IMR-90 (cell line): ENCODE measurements at regions of chr12 and their contacts with region 1.

Region 1: DNA sequence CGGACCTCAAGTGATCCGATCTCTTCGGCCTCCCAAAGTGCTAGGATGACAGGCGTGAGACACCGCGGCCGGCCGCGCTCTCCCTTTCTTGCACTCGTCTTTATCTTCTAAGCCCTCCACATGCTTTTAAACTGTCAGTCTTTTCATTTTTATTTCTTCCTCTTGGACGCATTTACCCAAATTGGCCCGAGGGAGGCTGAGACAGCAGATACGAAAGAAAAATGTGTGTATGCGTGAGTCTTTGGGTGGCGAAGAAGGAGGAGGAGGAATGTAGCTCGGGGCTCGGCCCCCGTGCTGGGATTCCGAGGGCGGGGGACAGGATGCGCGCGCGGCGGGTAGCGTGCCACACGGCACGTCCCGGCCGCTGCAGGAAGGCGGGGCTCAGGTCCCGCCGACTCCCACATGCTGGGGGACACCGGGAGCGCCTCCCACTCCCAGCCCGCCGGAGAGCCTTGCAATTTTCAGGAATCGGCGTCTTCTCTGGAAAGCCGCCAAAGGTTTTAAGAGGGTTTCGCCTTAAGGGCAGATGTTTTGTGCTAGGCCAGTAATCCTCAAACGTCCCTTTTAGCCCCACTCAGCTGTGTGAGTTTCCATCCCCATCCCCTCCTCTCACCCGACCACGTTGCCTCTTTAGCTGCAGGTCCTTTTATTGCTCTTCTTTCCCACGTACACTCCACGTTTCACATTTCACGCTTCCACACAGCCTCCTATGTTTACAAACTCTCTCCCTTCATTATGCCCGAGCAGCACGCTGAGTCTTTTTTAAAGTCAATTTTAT is 34.7 kb upstream of the SLC2A3 start:
- DNase-seq: peak; percentile 94
- ATAC-seq: peak; percentile 97
- H3K4me3 ChIP-seq: peak overlapping the region; percentile 42
- H3K27ac ChIP-seq: peak overlapping the region; percentile 96
- H3K4me1 ChIP-seq: peaks cover 6% of the 10 kb centered on the region
- H3K27me3 ChIP-seq: no peaks in the 10 kb centered on the region
- CTCF ChIP-seq: no peak
- POLR2A ChIP-seq: peak; percentile 72
- RAD21 ChIP-seq: peak; percentile 22

Region 2: GRCh38 chr12:7859552-7859951 is 111.1 kb before region 1 on chr12:
- CTCF ChIA-PET with region 1: no interaction called
- POLR2A ChIA-PET with region 1: no interaction called
- dilution Hi-C with region 1: no loop called
- in situ Hi-C with region 1: no loop called
- intact Hi-C with region 1: loop called (anchors 1 kb)
- DNase-seq: peak; percentile 81
- ATAC-seq: peak; percentile 58
- H3K4me3 ChIP-seq: no peak overlapping the region
- H3K27ac ChIP-seq: peak overlapping the region; percentile 43
- H3K4me1 ChIP-seq: peaks cover 3% of the 10 kb centered on the region
- H3K27me3 ChIP-seq: no peaks in the 10 kb centered on the region
- CTCF ChIP-seq: no peak
- POLR2A ChIP-seq: no peak
- RAD21 ChIP-seq: no peak

Region 3: DNA sequence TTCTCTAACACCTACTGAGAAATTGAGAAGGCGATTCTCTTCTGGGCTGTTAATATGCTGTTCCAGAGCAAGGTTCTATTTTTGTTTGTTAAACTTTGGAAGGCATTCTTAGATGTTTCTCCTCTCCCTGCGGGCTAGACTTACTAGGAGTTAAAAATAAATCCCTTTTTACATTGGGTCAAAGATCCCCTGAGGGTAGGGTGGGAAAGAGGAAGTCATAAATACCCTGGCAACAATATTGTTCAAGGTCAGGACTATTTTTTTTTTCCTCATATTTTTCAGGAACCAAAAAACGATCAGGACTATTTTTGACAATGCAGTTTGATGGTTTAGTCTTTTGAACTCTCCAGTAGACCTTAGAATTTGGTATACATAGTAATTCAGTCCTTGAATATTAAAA is 86.0 kb before region 1 on chr12:
- CTCF ChIA-PET with region 1: no interaction called
- POLR2A ChIA-PET with region 1: no interaction called
- dilution Hi-C with region 1: no loop called
- in situ Hi-C with region 1: no loop called
- intact Hi-C with region 1: no loop called
- DNase-seq: no peak
- ATAC-seq: no peak
- H3K4me3 ChIP-seq: no peak overlapping the region
- H3K27ac ChIP-seq: no peak overlapping the region
- H3K4me1 ChIP-seq: no peaks in the 10 kb centered on the region
- H3K27me3 ChIP-seq: no peaks in the 10 kb centered on the region
- CTCF ChIP-seq: no peak
- POLR2A ChIP-seq: no peak
- RAD21 ChIP-seq: no peak

Region 4: GRCh38 chr12:8026291-8026900 is 55.7 kb after region 1 on chr12:
- CTCF ChIA-PET with region 1: no interaction called
- POLR2A ChIA-PET with region 1: no interaction called
- dilution Hi-C with region 1: no loop called
- in situ Hi-C with region 1: no loop called
- intact Hi-C with region 1: loop called (anchors 2 kb)
- DNase-seq: peak; percentile 99
- ATAC-seq: peak; percentile 97
- H3K4me3 ChIP-seq: peak overlapping the region; percentile 76
- H3K27ac ChIP-seq: peak overlapping the region; percentile 94
- H3K4me1 ChIP-seq: no peaks in the 10 kb centered on the region
- H3K27me3 ChIP-seq: no peaks in the 10 kb centered on the region
- CTCF ChIP-seq: no peak
- POLR2A ChIP-seq: peak; percentile 94
- RAD21 ChIP-seq: no peak

Region 5: GRCh38 chr12:8697476-8698131 is 726.9 kb after region 1 on chr12 and contains the start of gene RIMKLB:
- CTCF ChIA-PET with region 1: no interaction called
- POLR2A ChIA-PET with region 1: no interaction called
- dilution Hi-C with region 1: no loop called
- in situ Hi-C with region 1: no loop called
- intact Hi-C with region 1: loop called (anchors 5 kb)
- DNase-seq: peak; percentile 57
- ATAC-seq: peak; percentile 91
- H3K4me3 ChIP-seq: peak within 1 kb of the TSS; percentile 97
- H3K27ac ChIP-seq: peak within 1 kb of the TSS; percentile 77
- H3K4me1 ChIP-seq: no peaks in the 10 kb centered on the region
- H3K27me3 ChIP-seq: no peaks in the 10 kb centered on the region
- CTCF ChIP-seq: no peak
- POLR2A ChIP-seq: peak; percentile 46
- RAD21 ChIP-seq: no peak
- total RNA-seq, gene RIMKLB: 18.8 and 23.1 TPM in 2 replicates